Activated CD4-positive, alpha-beta T cell treated with anti-CD3 and anti-CD28 coated beads, Interleukin-2, amount 10 ng/mL, durations not matched to agents 24 days and 14 days (primary cell): ENCODE measurements at regions of chr18 and their contacts with region 1.

Region 1: DNA sequence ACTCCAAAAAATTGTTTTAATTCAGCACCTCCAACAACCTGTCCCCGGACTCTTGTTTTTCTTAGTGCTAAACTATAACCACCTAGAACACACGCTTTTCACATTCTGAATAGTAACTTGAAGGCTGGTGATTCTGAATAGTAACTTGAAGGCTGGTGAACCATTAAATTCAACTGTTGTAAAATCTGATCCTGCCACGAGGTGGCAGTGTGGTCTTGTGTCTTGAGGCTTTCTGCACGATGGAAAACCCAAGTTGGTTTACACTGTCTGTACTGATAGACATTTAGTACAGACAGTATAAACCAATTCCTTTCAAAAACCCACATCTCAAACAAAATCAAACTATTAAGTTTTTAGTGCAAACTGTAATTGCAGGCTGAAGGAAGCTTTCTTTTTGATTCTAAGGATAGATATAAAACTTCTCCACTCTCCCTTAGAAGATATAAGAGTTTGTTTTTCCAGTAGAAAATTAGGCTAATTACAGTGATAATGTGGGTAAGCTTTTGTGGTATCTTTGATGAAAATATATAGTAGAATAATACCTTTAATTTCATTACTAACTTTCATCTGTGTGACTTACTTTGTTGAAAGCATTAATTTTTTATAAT is 57.6 kb downstream of the VAPA start:
- DNase-seq: peak; percentile 92
- H3K4me3 Mint-ChIP-seq: no peak overlapping the region
- H3K27ac Mint-ChIP-seq: no peak overlapping the region
- H3K4me1 Mint-ChIP-seq: peaks cover 8% of the 10 kb centered on the region
- H3K27me3 Mint-ChIP-seq: peaks cover 32% of the 10 kb centered on the region

Region 2: GRCh38 chr18:8754995-8755955 is 1216.1 kb before region 1 on chr18:
- intact Hi-C with region 1: loop called (anchors 5 kb)
- DNase-seq: peak; percentile 87
- H3K4me3 Mint-ChIP-seq: peak overlapping the region; percentile 58
- H3K27ac Mint-ChIP-seq: no peak overlapping the region
- H3K4me1 Mint-ChIP-seq: peaks cover 23% of the 10 kb centered on the region
- H3K27me3 Mint-ChIP-seq: peaks cover 10% of the 10 kb centered on the region

Region 3: GRCh38 chr18:10519999-10520935 is 548.9 kb after region 1 on chr18:
- intact Hi-C with region 1: loop called (anchors 1 kb)
- DNase-seq: peak; percentile 87
- H3K4me3 Mint-ChIP-seq: no peak overlapping the region
- H3K27ac Mint-ChIP-seq: no peak overlapping the region
- H3K4me1 Mint-ChIP-seq: peaks cover 17% of the 10 kb centered on the region
- H3K27me3 Mint-ChIP-seq: peaks cover 36% of the 10 kb centered on the region